Heart right ventricle (tissue), 16 donors: ENCODE measurements at regions of chr13 and their contacts with region 1.

Region 1: DNA sequence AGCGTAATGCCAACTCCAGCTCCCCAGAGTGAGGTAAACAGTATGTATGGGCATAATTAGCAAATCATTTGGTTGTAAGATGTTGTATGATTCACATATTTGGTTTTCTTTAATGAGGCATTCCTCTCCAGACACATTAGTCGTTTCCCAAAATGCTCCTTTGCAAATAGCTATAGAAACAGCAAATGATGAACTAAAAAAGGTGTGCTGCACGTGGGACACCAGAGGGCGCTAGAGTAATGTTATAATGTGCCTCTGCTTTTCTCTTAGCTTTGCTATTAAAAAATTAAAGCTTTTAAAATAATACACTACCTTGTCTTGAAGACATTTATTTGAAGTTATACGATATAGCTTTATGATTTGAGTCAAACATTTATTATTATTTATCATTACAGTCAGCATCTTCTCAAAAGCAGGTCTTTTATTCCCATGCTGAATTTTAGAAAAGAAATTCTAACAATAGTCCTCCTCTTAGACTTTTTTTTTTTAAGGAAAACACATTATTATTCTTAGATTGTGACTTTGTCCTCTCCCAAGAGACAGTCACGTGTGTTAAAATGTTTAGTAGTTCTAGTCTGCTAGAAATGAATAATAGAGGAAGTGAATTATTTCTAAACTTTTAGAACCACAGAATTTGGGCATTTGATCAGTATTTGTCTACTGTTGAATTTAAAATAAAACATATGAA is 121.6 kb upstream of the FRY start:
- DNase-seq: peak in 1 of 2 donors; percentile 76
- ATAC-seq: peak in 7 of 8 donors; percentile 25 to 70 (median 54)
- H3K4me3 ChIP-seq: no peak overlapping the region
- H3K27ac ChIP-seq: peak overlapping the region in 6 of 10 donors; percentile 29 to 67 (median 34)
- H3K4me1 ChIP-seq: peaks cover 7 to 66% (median 56%) of the 10 kb centered on the region in 9 donors
- H3K27me3 ChIP-seq: no peaks in the 10 kb centered on the region
- CTCF ChIP-seq: peak; percentile 78 to 96 (median 91)

Region 2: DNA sequence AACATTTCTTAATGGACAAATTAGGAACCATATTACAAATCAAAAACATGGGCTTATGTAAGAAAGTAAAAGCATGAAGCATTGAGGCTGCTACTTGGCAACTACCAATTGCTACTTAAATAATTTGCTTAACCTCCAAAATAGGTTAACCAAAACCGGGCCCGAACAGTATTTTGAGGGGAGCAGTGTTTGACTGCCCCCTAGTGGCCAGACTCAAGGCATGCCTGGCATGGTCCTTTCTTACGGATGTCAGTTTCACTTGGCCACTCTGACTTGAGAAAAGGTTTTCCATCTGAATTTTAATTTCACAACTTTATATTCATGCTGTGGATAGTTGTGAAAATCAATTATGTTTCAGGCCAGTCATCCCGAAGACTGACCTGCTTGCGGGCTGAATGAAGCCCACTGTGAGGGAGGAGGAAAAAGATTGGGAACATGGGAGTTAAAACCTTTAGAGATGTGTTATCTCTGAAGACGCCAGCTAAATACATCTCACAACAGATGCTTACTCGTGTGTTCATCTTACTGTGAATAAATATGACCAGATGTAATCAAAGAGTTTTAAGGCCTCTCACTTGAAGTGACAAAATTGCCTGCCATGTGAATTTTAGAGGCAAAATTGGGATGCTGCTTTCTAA is 167.8 kb before region 1 on chr13:
- intact Hi-C with region 1: no loop called
- DNase-seq: peak; percentile 44 to 64
- ATAC-seq: peak in 7 of 8 donors; percentile 66 to 87 (median 74)
- H3K4me3 ChIP-seq: no peak overlapping the region
- H3K27ac ChIP-seq: no peak overlapping the region
- H3K4me1 ChIP-seq: peaks cover 0 to 6% (median 0%) of the 10 kb centered on the region in 9 donors
- H3K27me3 ChIP-seq: peaks cover 0 to 24% (median 7%) of the 10 kb centered on the region in 7 donors
- CTCF ChIP-seq: peak; percentile 95 to 99 (median 99)

Region 3: DNA sequence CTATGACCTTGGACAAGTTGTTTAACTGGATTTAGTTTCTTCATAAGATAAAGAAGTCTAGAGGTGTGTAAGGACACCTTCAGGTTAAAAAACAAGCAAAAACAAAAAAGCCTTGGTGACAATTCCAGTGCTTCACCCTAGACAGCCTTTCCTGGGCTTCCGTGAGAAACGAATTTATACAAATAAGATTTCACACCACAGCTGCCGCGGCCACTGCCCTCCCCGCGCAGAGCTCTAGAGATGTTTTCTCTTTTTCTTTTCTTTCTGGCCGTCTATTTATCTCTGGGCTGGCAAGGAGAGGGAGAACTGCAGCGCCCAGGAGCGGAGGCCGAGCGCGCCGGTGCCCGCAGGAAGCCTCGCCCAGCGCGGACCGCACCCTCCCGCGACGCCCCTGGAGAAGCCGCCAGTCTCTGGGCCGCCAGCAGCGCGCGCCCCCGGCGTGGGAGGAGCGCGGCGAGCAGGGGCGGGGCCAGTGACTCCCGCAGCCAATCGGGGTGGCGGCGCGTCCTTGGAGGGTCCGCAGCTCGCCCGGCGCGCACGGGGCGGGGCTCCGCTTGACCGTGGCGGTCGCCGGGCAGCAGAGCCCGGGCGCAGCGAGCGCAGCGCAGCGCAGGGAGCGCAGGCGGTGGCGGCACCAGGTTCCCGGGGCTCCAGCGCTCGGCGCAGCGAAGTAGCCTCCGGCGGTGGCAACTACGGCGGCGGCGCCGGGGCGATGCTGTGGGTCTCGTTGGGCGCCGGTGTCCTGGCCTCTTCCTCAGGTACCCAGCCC is 63.6 kb before region 1 on chr13:
- intact Hi-C with region 1: loop called in 1 of 10 experiments (anchors 10 kb)
- DNase-seq: peak; percentile 92 to 95
- ATAC-seq: peak; percentile 96 to 99 (median 98)
- H3K4me3 ChIP-seq: peak overlapping the region; percentile 61 to 92 (median 82)
- H3K27ac ChIP-seq: peak overlapping the region; percentile 73 to 93 (median 88)
- H3K4me1 ChIP-seq: peaks cover 0 to 42% (median 30%) of the 10 kb centered on the region in 9 donors
- H3K27me3 ChIP-seq: peaks cover 0 to 6% (median 0%) of the 10 kb centered on the region in 7 donors
- CTCF ChIP-seq: no peak

Region 4: GRCh38 chr13:31965361-31966066 is 55.5 kb after region 1 on chr13:
- intact Hi-C with region 1: loop called in 1 of 10 experiments (anchors 5 kb)
- DNase-seq: no peak
- ATAC-seq: peak in 5 of 8 donors; percentile 48 to 60 (median 51)
- H3K4me3 ChIP-seq: no peak overlapping the region
- H3K27ac ChIP-seq: peak overlapping the region in 4 of 10 donors; percentile 19 to 43 (median 36)
- H3K4me1 ChIP-seq: peaks cover 0 to 67% (median 50%) of the 10 kb centered on the region in 9 donors
- H3K27me3 ChIP-seq: no peaks in the 10 kb centered on the region
- CTCF ChIP-seq: no peak

Region 5: GRCh38 chr13:32205431-32206096 is 295.6 kb after region 1 on chr13:
- intact Hi-C with region 1: loop called in 1 of 10 experiments (anchors 10 kb)
- DNase-seq: no peak
- ATAC-seq: peak in 1 of 8 donors; percentile 18
- H3K4me3 ChIP-seq: no peak overlapping the region
- H3K27ac ChIP-seq: peak overlapping the region in 8 of 10 donors; percentile 6 to 63 (median 34)
- H3K4me1 ChIP-seq: peaks cover 0 to 67% (median 27%) of the 10 kb centered on the region in 9 donors
- H3K27me3 ChIP-seq: no peaks in the 10 kb centered on the region
- CTCF ChIP-seq: no peak

Region 6: GRCh38 chr13:32310134-32310706 is 400.2 kb after region 1 on chr13:
- intact Hi-C with region 1: loop called in 8 of 10 experiments (anchors 2 to 10 kb)
- DNase-seq: peak in 1 of 2 donors; percentile 13
- ATAC-seq: peak; percentile 66 to 84 (median 75)
- H3K4me3 ChIP-seq: peak overlapping the region in 7 of 10 donors; percentile 9 to 39 (median 33)
- H3K27ac ChIP-seq: peak overlapping the region in 3 of 10 donors; percentile 17 to 42 (median 23)
- H3K4me1 ChIP-seq: peaks cover 0 to 23% (median 9%) of the 10 kb centered on the region in 9 donors
- H3K27me3 ChIP-seq: no peaks in the 10 kb centered on the region
- CTCF ChIP-seq: peak; percentile 65 to 85 (median 76)

Region 7: DNA sequence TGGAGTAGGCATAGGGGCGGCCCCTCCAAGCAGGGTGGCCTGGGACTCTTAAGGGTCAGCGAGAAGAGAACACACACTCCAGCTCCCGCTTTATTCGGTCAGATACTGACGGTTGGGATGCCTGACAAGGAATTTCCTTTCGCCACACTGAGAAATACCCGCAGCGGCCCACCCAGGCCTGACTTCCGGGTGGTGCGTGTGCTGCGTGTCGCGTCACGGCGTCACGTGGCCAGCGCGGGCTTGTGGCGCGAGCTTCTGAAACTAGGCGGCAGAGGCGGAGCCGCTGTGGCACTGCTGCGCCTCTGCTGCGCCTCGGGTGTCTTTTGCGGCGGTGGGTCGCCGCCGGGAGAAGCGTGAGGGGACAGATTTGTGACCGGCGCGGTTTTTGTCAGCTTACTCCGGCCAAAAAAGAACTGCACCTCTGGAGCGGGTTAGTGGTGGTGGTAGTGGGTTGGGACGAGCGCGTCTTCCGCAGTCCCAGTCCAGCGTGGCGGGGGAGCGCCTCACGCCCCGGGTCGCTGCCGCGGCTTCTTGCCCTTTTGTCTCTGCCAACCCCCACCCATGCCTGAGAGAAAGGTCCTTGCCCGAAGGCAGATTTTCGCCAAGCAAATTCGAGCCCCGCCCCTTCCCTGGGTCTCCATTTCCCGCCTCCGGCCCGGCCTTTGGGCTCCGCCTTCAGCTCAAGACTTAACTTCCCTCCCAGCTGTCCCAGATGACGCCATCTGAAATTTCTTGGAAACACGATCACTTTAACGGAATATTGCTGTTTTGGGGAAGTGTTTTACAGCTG is 405.4 kb after region 1 on chr13 and contains the starts of genes BRCA2 and ZAR1L:
- intact Hi-C with region 1: loop called in 6 of 10 experiments (anchors 2 to 5 kb)
- DNase-seq: peak; percentile 89
- ATAC-seq: peak; percentile 96 to 99 (median 98)
- H3K4me3 ChIP-seq: peak within 1 kb of the TSS; percentile 68 to 97 (median 80)
- H3K27ac ChIP-seq: peak within 1 kb of the TSS; percentile 79 to 100 (median 94)
- H3K4me1 ChIP-seq: peaks cover 0 to 37% (median 5%) of the 10 kb centered on the region in 9 donors
- H3K27me3 ChIP-seq: no peaks in the 10 kb centered on the region
- CTCF ChIP-seq: peak in 2 of 9 donors; percentile 3 to 10
- total RNA-seq, gene BRCA2: 0.12 to 2.3 (median 0.47) TPM
- total RNA-seq, gene ZAR1L: not detected